Activated B cell treated with CpG ODN at 0.5 μM for 24 hours (primary cell): ENCODE measurements at regions of chr1 and their contacts with region 1.

Region 1: GRCh38 chr1:247857069-247857984 is at the start of gene TRIM58:
- DNase-seq: peak; percentile 42
- ATAC-seq: peak; percentile 84
- H3K4me3 Mint-ChIP-seq: peak within 1 kb of the TSS; percentile 82
- H3K27ac Mint-ChIP-seq: peak within 1 kb of the TSS; percentile 46
- H3K4me1 Mint-ChIP-seq: peaks cover 12% of the 10 kb centered on the region
- H3K27me3 Mint-ChIP-seq: peaks cover 27% of the 10 kb centered on the region
- CTCF ChIP-seq: no peak
- total RNA-seq, gene TRIM58: 0.39 and 0.49 TPM in 2 replicates

Region 2: GRCh38 chr1:247517795-247518612 is 339.3 kb before region 1 on chr1:
- CTCF ChIA-PET with region 1: no interaction called
- POLR2A ChIA-PET with region 1: no interaction called
- intact Hi-C with region 1: no loop called
- DNase-seq: no peak
- ATAC-seq: no peak
- H3K4me3 Mint-ChIP-seq: no peak overlapping the region
- H3K27ac Mint-ChIP-seq: no peak overlapping the region
- H3K4me1 Mint-ChIP-seq: no peaks in the 10 kb centered on the region
- H3K27me3 Mint-ChIP-seq: peaks cover 8% of the 10 kb centered on the region
- CTCF ChIP-seq: no peak

Region 3: GRCh38 chr1:247681288-247681897 is 175.9 kb before region 1 on chr1:
- CTCF ChIA-PET with region 1: no interaction called
- POLR2A ChIA-PET with region 1: no interaction called
- intact Hi-C with region 1: loop called (anchors 5 kb)
- DNase-seq: no peak
- ATAC-seq: peak; percentile 37
- H3K4me3 Mint-ChIP-seq: no peak overlapping the region
- H3K27ac Mint-ChIP-seq: no peak overlapping the region
- H3K4me1 Mint-ChIP-seq: peaks cover 1% of the 10 kb centered on the region
- H3K27me3 Mint-ChIP-seq: peaks cover 2% of the 10 kb centered on the region
- CTCF ChIP-seq: no peak

Region 4: DNA sequence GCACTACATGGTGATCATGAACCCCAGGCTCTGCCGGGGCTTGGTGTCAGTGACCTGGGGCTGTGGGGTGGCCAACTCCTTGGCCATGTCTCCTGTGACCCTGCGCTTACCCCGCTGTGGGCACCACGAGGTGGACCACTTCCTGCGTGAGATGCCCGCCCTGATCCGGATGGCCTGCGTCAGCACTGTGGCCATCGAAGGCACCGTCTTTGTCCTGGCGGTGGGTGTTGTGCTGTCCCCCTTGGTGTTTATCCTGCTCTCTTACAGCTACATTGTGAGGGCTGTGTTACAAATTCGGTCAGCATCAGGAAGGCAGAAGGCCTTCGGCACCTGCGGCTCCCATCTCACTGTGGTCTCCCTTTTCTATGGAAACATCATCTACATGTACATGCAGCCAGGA is 38.6 kb after region 1 on chr1:
- CTCF ChIA-PET with region 1: no interaction called
- POLR2A ChIA-PET with region 1: no interaction called
- intact Hi-C with region 1: no loop called
- DNase-seq: no peak
- ATAC-seq: no peak
- H3K4me3 Mint-ChIP-seq: no peak overlapping the region
- H3K27ac Mint-ChIP-seq: no peak overlapping the region
- H3K4me1 Mint-ChIP-seq: no peaks in the 10 kb centered on the region
- H3K27me3 Mint-ChIP-seq: no peaks in the 10 kb centered on the region
- CTCF ChIP-seq: no peak